Psoas muscle (tissue), 8 donors: ENCODE measurements at regions of chr11 and their contacts with region 1.

Region 1: GRCh38 chr11:25981998-25982397 is 349.9 kb upstream of the ANO3 start:
- DNase-seq: no peak
- ATAC-seq: peak in 2 of 4 donors; percentile 9 to 53
- H3K4me3 ChIP-seq: no peak overlapping the region
- H3K27ac ChIP-seq: no peak overlapping the region
- H3K4me1 ChIP-seq: no peaks in the 10 kb centered on the region
- H3K27me3 ChIP-seq: no peaks in the 10 kb centered on the region
- CTCF ChIP-seq: peak; percentile 33

Region 2: DNA sequence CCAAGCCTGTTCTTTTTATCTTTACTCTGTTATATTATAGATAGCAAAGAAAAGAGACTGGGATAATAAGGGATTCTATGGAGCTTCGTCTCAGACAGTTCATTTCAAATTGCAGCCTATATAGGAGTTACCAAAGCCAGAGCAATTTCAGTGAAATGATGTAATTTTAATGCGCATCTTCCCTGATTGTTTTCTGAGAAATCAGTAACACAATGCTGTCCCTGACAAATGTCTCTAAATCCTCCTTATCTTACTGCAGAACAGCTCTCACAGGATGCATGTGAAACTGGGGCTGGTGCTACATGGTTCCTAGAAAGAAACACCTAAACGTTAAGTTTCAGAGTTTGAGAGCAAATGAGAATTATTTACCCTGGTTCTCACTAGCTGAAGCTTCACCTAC is 118.0 kb before region 1 on chr11:
- intact Hi-C with region 1: no loop called
- DNase-seq: no peak
- ATAC-seq: no peak
- H3K4me3 ChIP-seq: no peak overlapping the region
- H3K27ac ChIP-seq: no peak overlapping the region
- H3K4me1 ChIP-seq: peaks cover 10% of the 10 kb centered on the region
- H3K27me3 ChIP-seq: no peaks in the 10 kb centered on the region
- CTCF ChIP-seq: no peak

Region 3: GRCh38 chr11:25899761-25900160 is 82.2 kb before region 1 on chr11:
- intact Hi-C with region 1: no loop called
- DNase-seq: no peak
- ATAC-seq: no peak
- H3K4me3 ChIP-seq: no peak overlapping the region
- H3K27ac ChIP-seq: no peak overlapping the region
- H3K4me1 ChIP-seq: no peaks in the 10 kb centered on the region
- H3K27me3 ChIP-seq: no peaks in the 10 kb centered on the region
- CTCF ChIP-seq: no peak

Region 4: GRCh38 chr11:26134481-26135355 is 152.7 kb after region 1 on chr11:
- intact Hi-C with region 1: loop called in 1 of 2 experiments (anchors 10 kb)
- DNase-seq: no peak
- ATAC-seq: no peak
- H3K4me3 ChIP-seq: no peak overlapping the region
- H3K27ac ChIP-seq: no peak overlapping the region
- H3K4me1 ChIP-seq: no peaks in the 10 kb centered on the region
- H3K27me3 ChIP-seq: no peaks in the 10 kb centered on the region
- CTCF ChIP-seq: peak; percentile 18

Region 5: GRCh38 chr11:26227296-26227695 is 245.3 kb after region 1 on chr11:
- intact Hi-C with region 1: loop called in 1 of 2 experiments (anchors 5 kb)
- DNase-seq: no peak
- ATAC-seq: peak in 1 of 4 donors; percentile 37
- H3K4me3 ChIP-seq: no peak overlapping the region
- H3K27ac ChIP-seq: no peak overlapping the region
- H3K4me1 ChIP-seq: no peaks in the 10 kb centered on the region
- H3K27me3 ChIP-seq: no peaks in the 10 kb centered on the region
- CTCF ChIP-seq: peak; percentile 41

Region 6: GRCh38 chr11:26276798-26277424 is 294.9 kb after region 1 on chr11:
- intact Hi-C with region 1: loop called (anchors 2 to 10 kb)
- DNase-seq: peak in 1 of 2 donors; percentile 14
- ATAC-seq: peak; percentile 61 to 73 (median 70)
- H3K4me3 ChIP-seq: no peak overlapping the region
- H3K27ac ChIP-seq: no peak overlapping the region
- H3K4me1 ChIP-seq: no peaks in the 10 kb centered on the region
- H3K27me3 ChIP-seq: peaks cover 0 to 6% (median 0%) of the 10 kb centered on the region in 3 donors
- CTCF ChIP-seq: peak; percentile 87